IMR-90 (cell line): ENCODE measurements at regions of chr19 and their contacts with region 1.

Region 1: DNA sequence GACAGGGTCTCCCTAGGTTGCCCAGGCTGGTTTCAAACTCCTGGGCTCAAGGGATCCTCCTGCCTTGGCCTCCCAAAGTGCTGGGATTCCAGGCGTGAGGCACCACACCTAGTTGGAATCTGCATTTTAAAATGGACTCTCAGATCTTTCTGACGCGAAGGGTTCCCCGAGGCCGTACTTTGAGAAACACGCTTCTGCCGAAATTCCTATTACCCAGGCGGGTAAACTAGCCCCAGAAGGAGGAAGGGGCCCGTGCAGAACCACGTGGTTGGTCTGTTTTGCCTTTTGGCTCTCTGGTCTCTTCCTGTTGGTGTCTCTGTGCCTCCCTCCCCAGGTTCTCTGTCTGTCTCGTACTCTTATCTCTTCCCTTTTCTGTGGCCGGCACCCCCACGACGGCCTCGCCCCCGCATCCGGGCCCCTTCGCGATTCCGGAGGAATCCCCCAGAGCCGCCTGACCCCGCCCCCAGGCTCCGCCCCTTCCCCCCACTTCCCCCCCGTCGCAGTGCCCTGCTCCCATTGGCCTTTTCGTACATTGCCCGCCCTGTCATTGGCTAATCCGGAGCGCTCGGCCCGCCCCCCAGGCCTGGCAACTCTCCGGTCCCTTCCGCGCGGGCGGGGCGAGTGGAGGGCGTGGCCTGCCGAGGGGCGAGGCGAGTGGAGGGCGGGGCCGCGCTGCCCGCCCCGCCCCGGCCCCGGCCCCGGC is at the start of gene TNFAIP8L1:
- DNase-seq: peak; percentile 92
- ATAC-seq: peak; percentile 92
- H3K4me3 ChIP-seq: peak within 1 kb of the TSS; percentile 74
- H3K27ac ChIP-seq: peak within 1 kb of the TSS; percentile 90
- H3K4me1 ChIP-seq: peaks cover 17% of the 10 kb centered on the region
- H3K27me3 ChIP-seq: no peaks in the 10 kb centered on the region
- CTCF ChIP-seq: no peak
- POLR2A ChIP-seq: peak; percentile 43; the same call in 1 of the 2 replicates
- RAD21 ChIP-seq: no peak
- total RNA-seq, gene TNFAIP8L1: 2.5 and 3.1 TPM in 2 replicates

Region 2: DNA sequence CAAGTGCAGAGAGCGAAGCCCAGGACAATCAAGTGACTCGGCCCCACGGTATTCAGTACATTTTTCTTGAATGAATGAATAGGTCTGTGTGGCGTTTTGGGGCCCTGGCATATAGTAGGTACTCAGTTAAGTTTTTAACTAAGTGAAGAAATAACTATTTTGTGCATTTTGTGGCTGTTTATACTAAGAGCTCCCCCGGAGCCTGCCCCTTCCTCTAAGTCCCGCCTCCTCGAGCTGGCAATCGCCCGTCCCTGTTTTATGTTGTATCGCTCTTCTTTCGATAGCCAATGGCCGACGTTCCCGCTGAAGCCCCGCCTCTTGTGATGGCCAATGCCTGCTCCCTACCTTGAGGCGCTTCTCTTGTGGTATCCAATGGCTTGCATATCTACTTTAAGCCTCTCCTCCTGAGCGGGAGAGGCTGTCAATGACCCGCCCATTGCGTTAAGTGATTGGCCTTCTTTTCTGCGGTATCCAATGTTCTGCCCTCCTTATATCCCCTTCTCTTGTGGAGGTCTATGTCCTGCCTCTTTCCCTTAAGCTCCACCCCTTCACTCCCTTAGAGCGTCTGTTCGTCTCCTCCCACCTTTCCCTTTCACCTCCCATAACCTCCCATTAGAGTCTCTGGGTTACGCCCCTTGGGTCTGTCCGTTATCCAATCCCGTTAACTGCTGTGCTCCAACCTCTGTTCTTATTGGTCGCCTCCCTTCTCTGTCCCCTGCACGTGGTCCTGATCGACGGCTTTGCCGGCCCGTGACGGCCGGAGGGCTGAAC is 167.4 kb before region 1 on chr19:
- CTCF ChIA-PET with region 1: no interaction called
- POLR2A ChIA-PET with region 1: no interaction called
- dilution Hi-C with region 1: no loop called
- in situ Hi-C with region 1: no loop called
- intact Hi-C with region 1: loop called (anchors 5 kb)
- DNase-seq: peak; percentile 100
- ATAC-seq: peak; percentile 90
- H3K4me3 ChIP-seq: peak overlapping the region; percentile 49
- H3K27ac ChIP-seq: peak overlapping the region; percentile 74
- H3K4me1 ChIP-seq: peaks cover 4% of the 10 kb centered on the region
- H3K27me3 ChIP-seq: no peaks in the 10 kb centered on the region
- CTCF ChIP-seq: no peak
- POLR2A ChIP-seq: peak; percentile 65; the same call in 1 of the 2 replicates
- RAD21 ChIP-seq: no peak

Region 3: GRCh38 chr19:4557971-4558941 is 80.7 kb before region 1 on chr19:
- CTCF ChIA-PET with region 1: no interaction called
- POLR2A ChIA-PET with region 1: no interaction called
- dilution Hi-C with region 1: no loop called
- in situ Hi-C with region 1: no loop called
- intact Hi-C with region 1: loop called (anchors 2 kb)
- DNase-seq: no peak
- ATAC-seq: peak; percentile 87
- H3K4me3 ChIP-seq: no peak overlapping the region
- H3K27ac ChIP-seq: no peak overlapping the region
- H3K4me1 ChIP-seq: no peaks in the 10 kb centered on the region
- H3K27me3 ChIP-seq: no peaks in the 10 kb centered on the region
- CTCF ChIP-seq: peak; percentile 83
- POLR2A ChIP-seq: no peak
- RAD21 ChIP-seq: peak; percentile 70

Region 4: GRCh38 chr19:4576016-4576933 is 62.7 kb before region 1 on chr19:
- CTCF ChIA-PET with region 1: interaction called, 11 read pairs
- POLR2A ChIA-PET with region 1: no interaction called
- dilution Hi-C with region 1: no loop called
- in situ Hi-C with region 1: loop called (anchors 5 kb)
- intact Hi-C with region 1: loop called (anchors 1 kb)
- DNase-seq: peak; percentile 27
- ATAC-seq: peak; percentile 60
- H3K4me3 ChIP-seq: no peak overlapping the region
- H3K27ac ChIP-seq: no peak overlapping the region
- H3K4me1 ChIP-seq: peaks cover 9% of the 10 kb centered on the region
- H3K27me3 ChIP-seq: peaks cover 26% of the 10 kb centered on the region
- CTCF ChIP-seq: peak; percentile 60
- POLR2A ChIP-seq: no peak
- RAD21 ChIP-seq: peak; percentile 51

Region 5: DNA sequence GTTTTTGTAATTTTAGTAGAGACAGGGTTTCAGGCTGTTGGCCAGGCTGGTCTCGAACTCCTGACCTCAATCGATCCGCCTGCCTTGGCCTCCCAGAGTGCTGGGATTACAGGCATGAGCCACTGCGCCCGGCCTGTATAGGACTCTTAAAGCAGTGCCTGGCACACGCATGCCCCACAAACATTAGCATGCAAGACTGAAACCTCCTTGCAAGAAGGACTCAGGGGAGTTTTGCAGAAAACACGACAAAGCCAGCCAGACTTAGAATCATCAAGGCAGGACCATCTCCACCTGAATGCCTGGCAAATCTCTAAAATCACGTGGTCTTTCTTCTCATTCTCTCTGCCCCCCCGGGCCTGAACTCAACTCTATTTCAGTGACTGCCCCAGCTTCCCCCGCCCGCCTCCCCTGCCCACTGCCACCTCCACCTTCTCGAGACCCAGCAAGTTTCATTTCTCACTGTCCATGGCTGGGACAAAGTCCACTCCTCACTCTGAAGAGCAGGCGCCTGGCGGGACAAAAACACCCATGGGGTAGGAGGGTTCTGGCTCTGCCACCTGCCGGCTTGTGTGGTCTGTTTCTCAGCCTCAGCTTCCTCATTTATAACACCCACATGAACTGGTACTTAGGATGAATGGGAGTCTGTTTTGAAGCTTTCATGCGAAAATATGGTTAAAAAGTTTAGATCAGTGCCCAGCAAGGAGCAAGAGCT is 190.2 kb after region 1 on chr19:
- CTCF ChIA-PET with region 1: no interaction called
- POLR2A ChIA-PET with region 1: interaction called, 10 read pairs
- dilution Hi-C with region 1: no loop called
- in situ Hi-C with region 1: no loop called
- intact Hi-C with region 1: no loop called
- DNase-seq: no peak
- ATAC-seq: no peak
- H3K4me3 ChIP-seq: no peak overlapping the region
- H3K27ac ChIP-seq: no peak overlapping the region
- H3K4me1 ChIP-seq: peaks cover 11% of the 10 kb centered on the region
- H3K27me3 ChIP-seq: no peaks in the 10 kb centered on the region
- CTCF ChIP-seq: no peak
- POLR2A ChIP-seq: no peak
- RAD21 ChIP-seq: no peak